Caco-2 (cell line): ENCODE measurements at regions of chr3 and their contacts with region 1.

Region 1: GRCh38 chr3:52820736-52821135 is 9.7 kb downstream of the ITIH4 start:
- DNase-seq: peak; percentile 51 to 62
- H3K4me3 ChIP-seq: no peak overlapping the region
- H3K4me3 Mint-ChIP-seq: no peak overlapping the region
- H3K27ac Mint-ChIP-seq: no peak overlapping the region
- H3K4me1 ChIP-seq: no peaks in the 10 kb centered on the region
- H3K4me1 Mint-ChIP-seq: peaks cover 6% of the 10 kb centered on the region
- H3K27me3 ChIP-seq: no peaks in the 10 kb centered on the region
- H3K27me3 Mint-ChIP-seq: no peaks in the 10 kb centered on the region
- CTCF ChIP-seq: peak; percentile 64 to 84

Region 2: GRCh38 chr3:52742418-52743041 is 78.2 kb before region 1 on chr3:
- CTCF ChIA-PET with region 1: no interaction called
- POLR2A ChIA-PET with region 1: no interaction called
- intact Hi-C with region 1: loop called (anchors 1 kb)
- DNase-seq: peak in 1 of 2 experiments; percentile 51
- H3K4me3 ChIP-seq: no peak overlapping the region
- H3K4me3 Mint-ChIP-seq: no peak overlapping the region
- H3K27ac Mint-ChIP-seq: no peak overlapping the region
- H3K4me1 ChIP-seq: peaks cover 7% of the 10 kb centered on the region; the same call in 1 of the 2 replicates
- H3K4me1 Mint-ChIP-seq: peaks cover 11% of the 10 kb centered on the region
- H3K27me3 ChIP-seq: no peaks in the 10 kb centered on the region
- H3K27me3 Mint-ChIP-seq: no peaks in the 10 kb centered on the region
- CTCF ChIP-seq: peak; percentile 62 to 76

Region 3: GRCh38 chr3:52770496-52771333 is 50.0 kb before region 1 on chr3 and contains the start of gene NEK4:
- CTCF ChIA-PET with region 1: interaction called, 19 read pairs
- POLR2A ChIA-PET with region 1: no interaction called
- intact Hi-C with region 1: loop called (anchors 2 kb)
- DNase-seq: peak; percentile 94
- H3K4me3 ChIP-seq: peak within 1 kb of the TSS; percentile 88
- H3K4me3 Mint-ChIP-seq: peak within 1 kb of the TSS; percentile 81
- H3K27ac Mint-ChIP-seq: peak within 1 kb of the TSS; percentile 69
- H3K4me1 ChIP-seq: peaks cover 12% of the 10 kb centered on the region
- H3K4me1 Mint-ChIP-seq: peaks cover 26% of the 10 kb centered on the region
- H3K27me3 ChIP-seq: no peaks in the 10 kb centered on the region
- H3K27me3 Mint-ChIP-seq: no peaks in the 10 kb centered on the region
- CTCF ChIP-seq: peak in 1 of 2 experiments; percentile 1
- total RNA-seq, gene NEK4: 39.2 and 40.5 TPM in 2 replicates

Region 4: DNA sequence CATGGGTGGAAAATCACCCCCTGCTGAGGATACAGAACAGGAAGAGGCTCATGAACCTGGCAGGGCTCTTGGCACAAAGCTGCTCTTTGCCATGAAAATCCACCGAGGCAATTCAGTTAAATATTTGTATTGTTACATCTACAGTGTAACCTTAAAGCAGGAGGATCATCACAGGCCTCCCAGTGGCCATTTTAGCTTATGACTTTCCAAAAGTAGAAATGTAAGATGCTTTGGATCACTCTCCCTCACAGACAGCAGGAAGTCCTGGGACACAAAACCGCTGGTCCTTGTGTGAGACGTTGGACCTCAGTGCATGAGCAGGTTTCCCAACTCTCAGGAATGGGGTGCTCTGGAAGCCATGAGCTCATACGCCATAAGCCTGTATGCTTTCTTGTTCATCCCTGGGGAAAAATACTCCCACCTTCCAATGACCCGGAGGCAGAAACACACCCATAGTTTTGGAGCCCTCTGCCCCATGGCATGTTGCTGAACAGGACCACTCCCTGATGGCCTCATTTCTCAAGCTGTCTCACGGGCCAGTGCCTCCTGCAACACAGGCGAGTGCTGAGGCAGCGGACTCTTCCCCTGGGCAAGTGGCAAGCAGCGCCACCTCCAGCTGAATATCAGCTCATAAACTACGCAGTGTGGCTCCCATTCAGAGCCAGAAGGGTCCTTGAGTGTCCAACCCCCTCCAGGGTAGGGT is 46.5 kb after region 1 on chr3:
- CTCF ChIA-PET with region 1: no interaction called
- POLR2A ChIA-PET with region 1: no interaction called
- intact Hi-C with region 1: no loop called
- DNase-seq: no peak
- H3K4me3 ChIP-seq: no peak overlapping the region
- H3K4me3 Mint-ChIP-seq: no peak overlapping the region
- H3K27ac Mint-ChIP-seq: no peak overlapping the region
- H3K4me1 ChIP-seq: no peaks in the 10 kb centered on the region
- H3K4me1 Mint-ChIP-seq: peaks cover 9% of the 10 kb centered on the region
- H3K27me3 ChIP-seq: no peaks in the 10 kb centered on the region
- H3K27me3 Mint-ChIP-seq: no peaks in the 10 kb centered on the region
- CTCF ChIP-seq: no peak